WTC11 (cell line): ENCODE measurements at regions of chr14 and their contacts with region 1.

Region 1: DNA sequence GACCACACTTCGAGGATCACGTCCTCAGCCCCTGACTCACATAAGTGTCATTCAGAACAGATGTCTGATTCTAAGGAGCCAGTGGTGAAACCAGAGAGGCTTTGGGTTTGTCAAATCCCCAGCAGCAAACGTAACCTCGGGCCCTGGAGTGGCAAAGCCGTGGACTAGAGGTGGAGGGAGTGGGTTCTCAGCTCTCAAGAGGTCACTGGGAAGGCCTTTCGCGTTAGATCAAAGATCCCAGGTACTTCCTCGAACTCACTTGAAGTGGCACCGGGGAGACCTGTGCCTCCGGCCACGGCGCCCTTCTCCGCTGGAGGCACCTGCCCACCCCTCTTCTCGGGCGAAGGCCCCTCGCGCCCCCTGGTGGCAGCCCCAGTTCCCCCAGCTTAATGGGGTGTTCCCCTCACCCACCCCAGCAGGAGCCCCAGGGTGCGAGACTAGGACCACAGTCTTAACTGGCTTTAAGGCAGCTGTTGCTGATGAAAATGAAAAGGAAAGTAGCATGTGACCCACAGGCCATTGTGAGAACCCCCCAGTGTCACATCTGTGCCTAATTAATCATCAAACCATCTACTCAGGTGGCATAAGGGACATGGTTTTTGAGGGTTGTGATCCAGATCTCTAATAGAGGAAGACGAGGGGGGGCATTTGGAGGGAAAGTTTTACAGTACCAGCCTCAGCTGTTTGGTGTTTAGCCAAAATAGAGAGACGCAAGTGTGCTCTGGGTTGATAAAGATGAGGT is 672 bp upstream of the ESR2 start:
- DNase-seq: peak; percentile 93
- ATAC-seq: peak; percentile 89
- H3K4me3 Mint-ChIP-seq: peak overlapping the region; percentile 75
- H3K27ac Mint-ChIP-seq: no peak overlapping the region
- H3K4me1 Mint-ChIP-seq: peaks cover 10% of the 10 kb centered on the region
- H3K27me3 Mint-ChIP-seq: peaks cover 25% of the 10 kb centered on the region
- CTCF ChIP-seq: peak; percentile 96

Region 2: GRCh38 chr14:64137657-64138290 is 157.1 kb before region 1 on chr14:
- CTCF ChIA-PET with region 1: interaction called, 35 read pairs
- POLR2A ChIA-PET with region 1: no interaction called
- DNase-seq: peak; percentile 24
- ATAC-seq: peak; percentile 41; the same call in 1 of the 2 replicates
- H3K4me3 Mint-ChIP-seq: no peak overlapping the region
- H3K27ac Mint-ChIP-seq: no peak overlapping the region
- H3K4me1 Mint-ChIP-seq: no peaks in the 10 kb centered on the region
- H3K27me3 Mint-ChIP-seq: no peaks in the 10 kb centered on the region
- CTCF ChIP-seq: no peak

Region 3: GRCh38 chr14:64279704-64280668 is 14.9 kb before region 1 on chr14:
- CTCF ChIA-PET with region 1: interaction called, 14 read pairs
- POLR2A ChIA-PET with region 1: no interaction called
- DNase-seq: no peak
- ATAC-seq: no peak
- H3K4me3 Mint-ChIP-seq: no peak overlapping the region
- H3K27ac Mint-ChIP-seq: no peak overlapping the region
- H3K4me1 Mint-ChIP-seq: peaks cover 20% of the 10 kb centered on the region
- H3K27me3 Mint-ChIP-seq: no peaks in the 10 kb centered on the region
- CTCF ChIP-seq: no peak